ENCODE measurements at regions of chr19 and their contacts with region 1.

Region 1: GRCh38 chr19:9435279-9436268 is at the start of gene ZNF266:
- DNase-seq: peak; percentile 89 to 94 (median 91)
- ATAC-seq: peak; percentile 91 to 97 (median 96)
- H3K4me3 ChIP-seq: peak within 1 kb of the TSS; percentile 30 to 95 (median 80)
- H3K27ac ChIP-seq: peak within 1 kb of the TSS; percentile 68 to 95 (median 92)
- H3K4me1 ChIP-seq: peaks cover 0 to 27% (median 16%) of the 10 kb centered on the region in 12 donors
- H3K27me3 ChIP-seq: no peaks in the 10 kb centered on the region
- CTCF ChIP-seq: peak; percentile 40 to 80 (median 70)
- POLR2A ChIP-seq: peak in 1 of 2 donors; percentile 46
- total RNA-seq, gene ZNF266: 5.7 to 11.1 (median 7.7) TPM

Region 2: GRCh38 chr19:9140159-9140874 is 295.3 kb before region 1 on chr19 and contains the start of gene ZNF317:
- intact Hi-C with region 1: loop called in 1 of 10 experiments (anchors 10 kb)
- DNase-seq: peak; percentile 92 to 96 (median 94)
- ATAC-seq: peak; percentile 93 to 99 (median 98)
- H3K4me3 ChIP-seq: peak within 1 kb of the TSS; percentile 62 to 96 (median 80)
- H3K27ac ChIP-seq: peak within 1 kb of the TSS; percentile 54 to 94 (median 84)
- H3K4me1 ChIP-seq: peaks cover 0 to 27% (median 15%) of the 10 kb centered on the region in 12 donors
- H3K27me3 ChIP-seq: no peaks in the 10 kb centered on the region
- CTCF ChIP-seq: peak in 1 of 12 donors; percentile 17
- POLR2A ChIP-seq: peak in 1 of 2 donors; percentile 70
- total RNA-seq, gene ZNF317: 8.4 to 21.6 (median 13.5) TPM

Region 3: GRCh38 chr19:9309139-9309973 is 126.2 kb before region 1 on chr19 and contains the start of gene ZNF699:
- intact Hi-C with region 1: loop called in 3 of 10 experiments (anchors 5 to 10 kb)
- DNase-seq: peak; percentile 99 to 100 (median 99)
- ATAC-seq: peak; percentile 98 to 99 (median 98)
- H3K4me3 ChIP-seq: peak within 1 kb of the TSS; percentile 50 to 99 (median 96)
- H3K27ac ChIP-seq: peak within 1 kb of the TSS; percentile 89 to 99 (median 96)
- H3K4me1 ChIP-seq: peaks cover 0 to 24% (median 11%) of the 10 kb centered on the region in 12 donors
- H3K27me3 ChIP-seq: no peaks in the 10 kb centered on the region
- CTCF ChIP-seq: no peak
- POLR2A ChIP-seq: peak in 1 of 2 donors; percentile 83
- total RNA-seq, gene ZNF699: 2.7 to 6.3 (median 4.1) TPM

Region 4: GRCh38 chr19:9406798-9407352 is 28.7 kb before region 1 on chr19:
- intact Hi-C with region 1: loop called in 1 of 10 experiments (anchors 1 kb)
- DNase-seq: peak; percentile 83 to 94 (median 88)
- ATAC-seq: peak; percentile 92 to 99 (median 98)
- H3K4me3 ChIP-seq: peak overlapping the region; percentile 15 to 80 (median 66)
- H3K27ac ChIP-seq: peak overlapping the region in 10 of 12 donors; percentile 14 to 76 (median 47)
- H3K4me1 ChIP-seq: peaks cover 0 to 28% (median 0%) of the 10 kb centered on the region in 12 donors
- H3K27me3 ChIP-seq: no peaks in the 10 kb centered on the region
- CTCF ChIP-seq: no peak
- POLR2A ChIP-seq: no peak

Region 5: GRCh38 chr19:9474975-9475374 is 39.4 kb after region 1 on chr19:
- intact Hi-C with region 1: no loop called
- DNase-seq: no peak
- ATAC-seq: no peak
- H3K4me3 ChIP-seq: no peak overlapping the region
- H3K27ac ChIP-seq: no peak overlapping the region
- H3K4me1 ChIP-seq: no peaks in the 10 kb centered on the region
- H3K27me3 ChIP-seq: no peaks in the 10 kb centered on the region
- CTCF ChIP-seq: no peak
- POLR2A ChIP-seq: no peak

Region 6: GRCh38 chr19:9584073-9584833 is 148.7 kb after region 1 on chr19 and contains the start of gene ZNF121:
- intact Hi-C with region 1: loop called in 1 of 10 experiments (anchors 10 kb)
- DNase-seq: peak; percentile 87 to 92 (median 90)
- ATAC-seq: peak; percentile 93 to 98 (median 97)
- H3K4me3 ChIP-seq: peak within 1 kb of the TSS; percentile 53 to 98 (median 87)
- H3K27ac ChIP-seq: peak within 1 kb of the TSS; percentile 69 to 95 (median 91)
- H3K4me1 ChIP-seq: peaks cover 0 to 30% (median 19%) of the 10 kb centered on the region in 12 donors
- H3K27me3 ChIP-seq: peaks cover 0 to 14% (median 0%) of the 10 kb centered on the region in 9 donors
- CTCF ChIP-seq: peak in 2 of 12 donors; percentile 10 to 13
- POLR2A ChIP-seq: peak in 1 of 2 donors; percentile 38
- total RNA-seq, gene ZNF121: 15.6 to 25.4 (median 19.1) TPM

Measured in heart left ventricle (tissue), 16 donors.